PC-9 (cell line): ENCODE measurements at regions of chr1 and their contacts with region 1.

Region 1: GRCh38 chr1:74771913-74772515 is 39.1 kb downstream of the TYW3 start:
- DNase-seq: peak in 1 of 2 experiments; percentile 41
- H3K4me3 ChIP-seq: no peak overlapping the region
- H3K27ac ChIP-seq: no peak overlapping the region
- H3K4me1 ChIP-seq: no peaks in the 10 kb centered on the region
- H3K27me3 ChIP-seq: no peaks in the 10 kb centered on the region
- CTCF ChIP-seq: peak; percentile 83

Region 2: GRCh38 chr1:75203415-75204277 is 431.6 kb after region 1 on chr1:
- CTCF ChIA-PET with region 1: interaction called, 11 read pairs
- POLR2A ChIA-PET with region 1: no interaction called
- intact Hi-C with region 1: loop called (anchors 1 kb)
- DNase-seq: peak in 1 of 2 experiments; percentile 51
- H3K4me3 ChIP-seq: no peak overlapping the region
- H3K27ac ChIP-seq: no peak overlapping the region
- H3K4me1 ChIP-seq: no peaks in the 10 kb centered on the region
- H3K27me3 ChIP-seq: no peaks in the 10 kb centered on the region
- CTCF ChIP-seq: peak; percentile 85